ENCODE measurements at regions of chr10 and their contacts with region 1.

Region 1: DNA sequence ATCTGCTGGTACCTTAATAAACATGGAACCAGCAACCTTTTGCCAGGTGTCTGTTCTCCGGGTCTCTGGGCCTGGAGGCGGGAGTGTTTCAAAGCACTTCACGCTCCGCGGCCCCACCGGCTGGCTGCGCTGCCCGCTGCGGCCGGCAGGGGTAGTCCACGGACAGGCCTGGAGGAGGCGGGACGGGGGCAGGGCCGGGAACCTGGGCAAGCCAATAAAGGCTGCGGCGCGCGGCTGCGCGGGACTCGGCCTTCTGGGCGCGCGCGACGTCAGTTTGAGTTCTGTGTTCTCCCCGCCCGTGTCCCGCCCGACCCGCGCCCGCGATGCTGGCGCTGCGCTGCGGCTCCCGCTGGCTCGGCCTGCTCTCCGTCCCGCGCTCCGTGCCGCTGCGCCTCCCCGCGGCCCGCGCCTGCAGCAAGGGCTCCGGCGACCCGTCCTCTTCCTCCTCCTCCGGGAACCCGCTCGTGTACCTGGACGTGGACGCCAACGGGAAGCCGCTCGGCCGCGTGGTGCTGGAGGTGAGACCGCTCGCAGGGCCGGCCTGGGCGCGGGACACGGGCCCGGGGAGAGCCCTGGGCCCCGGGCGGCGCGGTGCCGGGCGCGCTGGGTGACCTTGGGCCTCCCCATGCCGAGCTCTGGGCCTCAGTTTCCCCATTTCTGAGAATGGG is at the start of gene PPIF:
- DNase-seq: peak; percentile 96
- ATAC-seq: peak; percentile 86
- H3K4me3 Mint-ChIP-seq: peak within 1 kb of the TSS; percentile 91
- H3K27ac Mint-ChIP-seq: peak within 1 kb of the TSS; percentile 89
- H3K4me1 Mint-ChIP-seq: peaks cover 34% of the 10 kb centered on the region
- H3K27me3 Mint-ChIP-seq: peaks cover 1% of the 10 kb centered on the region
- total RNA-seq, gene PPIF: 56.9 to 57.0 TPM

Region 2: GRCh38 chr10:79322616-79323543 is 24.5 kb before region 1 on chr10:
- POLR2A ChIA-PET with region 1: interaction called, 108 read pairs
- DNase-seq: peak; percentile 75
- ATAC-seq: peak; percentile 89
- H3K4me3 Mint-ChIP-seq: peak overlapping the region; percentile 77
- H3K27ac Mint-ChIP-seq: peak overlapping the region; percentile 97
- H3K4me1 Mint-ChIP-seq: peaks cover 61% of the 10 kb centered on the region
- H3K27me3 Mint-ChIP-seq: no peaks in the 10 kb centered on the region

Region 3: DNA sequence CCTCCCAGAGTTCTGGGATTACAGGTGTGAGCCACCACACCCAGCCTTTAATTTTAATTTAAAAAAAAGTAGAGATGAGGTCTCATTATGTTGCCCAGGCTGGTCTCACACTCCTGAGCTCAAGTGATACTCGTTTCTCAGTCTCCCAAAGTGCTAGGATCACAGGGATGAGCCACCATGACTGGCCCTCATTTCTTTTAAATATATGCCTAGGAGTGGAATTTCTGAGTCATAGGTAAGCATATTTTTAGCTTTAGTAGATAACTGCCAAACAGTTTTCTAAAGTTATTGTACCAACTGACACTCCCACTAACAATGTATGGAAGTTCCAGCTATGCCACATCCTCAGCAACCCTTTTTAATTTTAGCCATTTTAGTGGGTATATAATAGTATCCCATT is 13.9 kb before region 1 on chr10:
- POLR2A ChIA-PET with region 1: interaction called, 10 read pairs
- DNase-seq: no peak
- ATAC-seq: no peak
- H3K4me3 Mint-ChIP-seq: no peak overlapping the region
- H3K27ac Mint-ChIP-seq: no peak overlapping the region
- H3K4me1 Mint-ChIP-seq: peaks cover 16% of the 10 kb centered on the region
- H3K27me3 Mint-ChIP-seq: no peaks in the 10 kb centered on the region

Measured in activated naive CD8-positive, alpha-beta T cell treated with anti-CD3 and anti-CD28 coated beads, Interleukin-2, amount 10 ng/mL, durations not matched to agents 7 days and 5 days (primary cell).